Astrocyte of the cerebellum (primary cell): ENCODE measurements at regions of chr7 and their contacts with region 1.

Region 1: GRCh38 chr7:37198906-37199485 is 249.7 kb downstream of the ELMO1 start:
- DNase-seq: peak; percentile 64
- H3K4me3 ChIP-seq: no peak overlapping the region
- CTCF ChIP-seq: peak; percentile 93

Region 2: GRCh38 chr7:36490404-36490830 is 708.6 kb before region 1 on chr7:
- in situ Hi-C with region 1: loop called (anchors 5 kb)
- DNase-seq: peak; percentile 47
- H3K4me3 ChIP-seq: no peak overlapping the region
- CTCF ChIP-seq: no peak